Body of pancreas (tissue), 4 donors: ENCODE measurements at regions of chr2 and their contacts with region 1.

Region 1: GRCh38 chr2:188512456-188512855 is 220.8 kb downstream of the GULP1 start:
- DNase-seq: no peak
- ATAC-seq: peak; percentile 84
- H3K4me3 ChIP-seq: no peak overlapping the region
- H3K27ac ChIP-seq: no peak overlapping the region
- H3K4me1 ChIP-seq: peaks cover 14% of the 10 kb centered on the region
- H3K27me3 ChIP-seq: no peaks in the 10 kb centered on the region
- CTCF ChIP-seq: peak; percentile 7 to 76 (median 64)
- POLR2A ChIP-seq: no peak

Region 2: DNA sequence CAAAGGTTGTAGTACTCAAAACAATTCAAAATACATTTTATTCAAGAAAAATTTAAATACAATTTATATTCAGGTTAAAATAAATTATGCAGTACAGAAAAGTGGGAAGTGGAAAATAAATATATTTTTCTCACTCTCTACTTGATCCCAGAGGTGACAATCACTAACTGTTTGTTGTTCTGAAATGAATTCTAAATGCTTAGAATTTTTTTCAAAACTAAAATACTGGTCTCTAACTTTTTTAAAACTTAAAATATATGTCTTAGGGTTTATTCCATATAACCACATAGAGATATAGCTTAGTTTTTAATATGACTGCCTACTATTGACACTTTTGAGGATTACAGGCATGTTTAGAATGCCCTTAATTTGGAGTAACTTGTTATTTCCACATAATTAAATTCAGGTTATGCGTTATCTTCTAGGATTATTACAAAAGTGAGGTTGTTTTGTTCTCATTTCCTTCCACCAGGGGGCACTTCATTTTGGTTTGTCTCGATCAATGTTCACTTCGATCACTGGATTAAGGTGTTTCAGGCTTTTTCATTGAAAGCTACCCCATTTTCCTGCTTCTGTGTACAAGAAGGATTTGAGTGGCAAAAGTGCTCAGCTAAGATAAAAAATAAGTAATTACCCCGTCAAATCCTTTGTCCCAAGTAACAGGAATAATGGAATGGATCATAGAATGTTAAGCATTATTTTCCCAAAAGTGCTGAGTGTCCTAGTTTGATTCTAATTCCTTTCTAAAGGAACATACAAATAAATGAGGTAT is 931.1 kb before region 1 on chr2:
- intact Hi-C with region 1: loop called (anchors 10 kb)
- DNase-seq: peak; percentile 19 to 36 (median 24)
- ATAC-seq: peak; percentile 77
- H3K4me3 ChIP-seq: no peak overlapping the region
- H3K27ac ChIP-seq: no peak overlapping the region
- H3K4me1 ChIP-seq: peaks cover 10% of the 10 kb centered on the region
- H3K27me3 ChIP-seq: no peaks in the 10 kb centered on the region
- CTCF ChIP-seq: peak in 6 of 7 experiments; percentile 51 to 76 (median 70)
- POLR2A ChIP-seq: no peak

Region 3: GRCh38 chr2:188132385-188132784 is 380.1 kb before region 1 on chr2:
- intact Hi-C with region 1: no loop called
- DNase-seq: peak in 2 of 4 donors; percentile 13 to 24
- ATAC-seq: no peak
- H3K4me3 ChIP-seq: no peak overlapping the region
- H3K27ac ChIP-seq: no peak overlapping the region
- H3K4me1 ChIP-seq: no peaks in the 10 kb centered on the region
- H3K27me3 ChIP-seq: no peaks in the 10 kb centered on the region
- CTCF ChIP-seq: no peak
- POLR2A ChIP-seq: no peak

Region 4: DNA sequence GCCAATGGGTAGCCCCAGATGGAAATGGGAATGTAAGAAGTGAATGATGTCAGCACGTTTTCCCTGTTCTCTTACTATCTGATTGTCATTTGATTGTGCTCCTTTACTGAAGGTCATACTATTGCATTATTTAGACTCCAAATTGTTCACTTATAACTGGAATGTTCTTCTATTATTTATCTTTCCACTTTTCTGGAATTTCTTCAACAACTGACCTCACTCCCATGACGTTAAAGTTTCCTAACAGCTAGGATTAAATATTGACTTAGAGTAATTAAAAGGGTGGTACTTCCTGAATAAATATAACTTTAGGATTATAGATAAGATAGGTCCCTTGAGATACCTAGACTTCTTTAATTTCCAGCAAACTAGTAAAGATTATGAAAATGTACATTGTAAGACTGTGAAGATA is 231.6 kb before region 1 on chr2:
- intact Hi-C with region 1: loop called (anchors 10 kb)
- DNase-seq: peak in 1 of 4 donors; percentile 51
- ATAC-seq: peak; percentile 93
- H3K4me3 ChIP-seq: no peak overlapping the region
- H3K27ac ChIP-seq: peak overlapping the region in 2 of 4 donors; percentile 34 to 53
- H3K4me1 ChIP-seq: peaks cover 28% of the 10 kb centered on the region
- H3K27me3 ChIP-seq: no peaks in the 10 kb centered on the region
- CTCF ChIP-seq: no peak
- POLR2A ChIP-seq: no peak